Mammary epithelial cell (primary cell): ENCODE measurements at regions of chrX and their contacts with region 1.

Region 1: GRCh38 chrX:49922291-49923241 is at the start of gene CLCN5:
- DNase-seq: peak; percentile 91
- H3K4me3 ChIP-seq: peak within 1 kb of the TSS; percentile 63 to 66 (median 64)
- H3K27ac ChIP-seq: peak within 1 kb of the TSS; percentile 76
- H3K4me1 ChIP-seq: peaks cover 3% of the 10 kb centered on the region
- H3K27me3 ChIP-seq: no peaks in the 10 kb centered on the region
- CTCF ChIP-seq: no peak
- total RNA-seq, gene CLCN5: 6.9 to 10.8 TPM

Region 2: DNA sequence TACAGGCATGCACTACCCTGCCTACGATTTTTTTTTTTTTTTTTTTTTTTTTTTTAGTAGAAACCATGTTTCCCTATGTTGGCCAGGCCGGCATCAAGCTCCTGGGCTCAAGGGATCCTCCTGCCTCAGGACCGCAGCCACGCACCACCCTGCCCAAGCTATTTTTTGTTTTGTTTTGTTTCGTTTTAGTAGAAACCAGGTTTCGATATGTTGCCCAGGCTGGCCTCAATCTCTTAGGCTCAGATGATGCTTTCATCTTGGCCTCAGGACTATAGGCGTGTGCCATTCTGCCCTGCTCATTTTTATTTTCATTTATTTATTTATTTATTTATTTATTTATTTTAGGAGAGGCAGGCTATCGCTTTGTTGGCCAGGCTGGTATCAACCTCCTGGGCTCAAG is 1564.9 kb before region 1 on chrX:
- CTCF ChIA-PET with region 1: no interaction called
- dilution Hi-C with region 1: no loop called
- in situ Hi-C with region 1: no loop called
- intact Hi-C with region 1: no loop called
- DNase-seq: no peak
- H3K4me3 ChIP-seq: no peak overlapping the region
- H3K27ac ChIP-seq: no peak overlapping the region
- H3K4me1 ChIP-seq: no peaks in the 10 kb centered on the region
- H3K27me3 ChIP-seq: no peaks in the 10 kb centered on the region
- CTCF ChIP-seq: no peak

Region 3: DNA sequence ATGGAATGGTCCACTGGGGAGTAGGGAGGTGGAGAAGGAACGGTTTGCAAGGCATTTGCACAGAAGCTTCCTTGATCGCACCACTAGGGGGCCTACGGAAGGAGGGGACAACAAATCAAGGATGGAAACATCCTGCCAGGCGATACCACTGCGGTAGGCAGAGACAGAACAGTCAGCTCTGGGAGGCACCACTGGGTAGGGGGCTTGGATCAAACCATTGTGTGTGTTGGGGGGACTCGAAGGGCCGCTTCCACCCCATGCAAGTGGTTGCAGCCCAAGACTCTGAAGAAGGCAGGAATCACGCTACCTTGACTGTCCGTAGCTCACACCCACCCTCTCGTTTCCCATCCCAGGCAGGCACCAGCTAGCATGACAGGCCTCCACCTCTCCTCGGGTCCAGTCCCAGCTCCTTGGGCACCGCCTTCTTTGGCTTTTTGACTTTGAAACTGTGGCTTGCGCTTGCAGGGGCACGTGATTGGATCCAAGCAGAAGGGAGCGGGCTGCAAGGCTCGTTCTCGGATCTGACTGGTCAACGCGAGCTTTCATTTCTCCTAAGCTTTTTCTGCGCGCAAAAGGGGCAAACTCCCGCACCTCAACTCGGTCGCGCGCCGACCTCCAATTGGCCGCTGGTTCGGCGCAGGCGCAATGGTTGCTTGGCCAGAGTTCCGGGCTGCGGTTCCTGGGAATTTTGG is 295.3 kb before region 1 on chrX:
- CTCF ChIA-PET with region 1: no interaction called
- dilution Hi-C with region 1: no loop called
- in situ Hi-C with region 1: no loop called
- intact Hi-C with region 1: no loop called
- DNase-seq: peak; percentile 1
- H3K4me3 ChIP-seq: no peak overlapping the region
- H3K27ac ChIP-seq: no peak overlapping the region
- H3K4me1 ChIP-seq: no peaks in the 10 kb centered on the region
- H3K27me3 ChIP-seq: no peaks in the 10 kb centered on the region
- CTCF ChIP-seq: no peak

Region 4: DNA sequence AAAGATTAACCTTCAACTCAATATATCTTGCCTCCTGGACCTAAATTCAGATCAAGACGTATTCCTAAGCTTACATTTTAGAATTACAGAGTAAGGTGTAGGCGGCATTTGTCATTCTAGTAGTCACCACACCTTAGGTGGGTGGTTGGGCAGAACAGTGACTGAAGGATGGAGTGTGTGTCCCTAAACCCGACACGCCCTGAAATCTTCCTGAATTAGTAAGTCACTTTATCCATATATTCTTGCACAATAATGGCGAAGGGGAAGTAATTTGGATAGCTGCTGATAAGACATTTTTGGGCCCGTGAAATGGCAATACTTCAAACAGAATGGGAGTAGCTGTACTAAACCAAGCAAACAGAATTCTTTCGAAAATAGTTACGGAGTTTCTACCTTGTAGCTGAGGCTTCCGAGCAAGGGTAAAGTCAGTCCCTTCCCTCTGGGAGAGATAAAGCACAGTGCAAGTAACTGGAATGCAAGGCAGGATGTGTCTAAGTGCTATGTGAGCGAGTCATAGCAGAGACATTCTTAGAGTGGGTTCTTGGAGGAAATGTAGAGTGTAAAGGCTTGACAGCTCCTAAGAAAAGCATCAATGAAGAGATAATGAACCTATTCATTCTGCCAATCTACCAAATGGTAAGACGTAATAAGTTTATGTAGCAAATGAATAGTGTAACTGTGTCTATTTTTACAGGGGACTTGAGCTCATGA is 72.6 kb after region 1 on chrX:
- CTCF ChIA-PET with region 1: no interaction called
- dilution Hi-C with region 1: no loop called
- in situ Hi-C with region 1: no loop called
- intact Hi-C with region 1: loop called (anchors 5 kb)
- DNase-seq: peak; percentile 16
- H3K4me3 ChIP-seq: no peak overlapping the region
- H3K27ac ChIP-seq: peak overlapping the region; percentile 58
- H3K4me1 ChIP-seq: peaks cover 32% of the 10 kb centered on the region
- H3K27me3 ChIP-seq: no peaks in the 10 kb centered on the region
- CTCF ChIP-seq: no peak

Region 5: DNA sequence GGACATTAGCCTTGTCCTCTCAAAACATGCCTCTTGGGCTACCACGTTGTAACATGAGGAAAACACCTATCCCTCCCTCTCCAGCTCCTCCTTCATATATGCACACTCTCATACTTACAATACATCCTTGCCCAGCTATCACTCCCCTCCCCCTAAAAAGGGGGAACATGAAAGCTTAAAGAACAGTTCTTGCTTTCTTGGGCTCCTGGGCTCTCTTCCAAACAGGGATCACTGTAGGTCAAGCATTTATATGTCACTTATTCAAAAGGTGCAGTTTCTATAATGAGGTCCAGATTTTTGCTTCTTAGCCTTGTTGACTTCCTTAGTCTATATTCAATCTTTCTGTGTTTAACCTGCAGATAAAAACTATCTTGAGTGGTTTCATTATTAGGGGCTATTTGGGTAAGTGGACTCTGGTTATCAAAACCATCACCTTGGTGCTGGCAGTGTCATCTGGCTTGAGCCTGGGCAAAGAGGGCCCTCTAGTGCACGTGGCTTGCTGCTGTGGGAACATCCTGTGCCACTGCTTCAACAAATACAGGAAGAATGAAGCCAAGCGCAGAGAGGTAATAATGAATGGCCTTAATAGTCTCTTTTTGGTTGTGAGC is 158.8 kb after region 1 on chrX:
- CTCF ChIA-PET with region 1: no interaction called
- dilution Hi-C with region 1: no loop called
- in situ Hi-C with region 1: no loop called
- intact Hi-C with region 1: loop called (anchors 2 kb)
- DNase-seq: no peak
- H3K4me3 ChIP-seq: no peak overlapping the region
- H3K27ac ChIP-seq: no peak overlapping the region
- H3K4me1 ChIP-seq: no peaks in the 10 kb centered on the region
- H3K27me3 ChIP-seq: peaks cover 2% of the 10 kb centered on the region
- CTCF ChIP-seq: peak; percentile 24 to 46

Region 6: GRCh38 chrX:50579955-50580354 is 657.4 kb after region 1 on chrX:
- CTCF ChIA-PET with region 1: no interaction called
- dilution Hi-C with region 1: no loop called
- in situ Hi-C with region 1: loop called (anchors 25 kb)
- intact Hi-C with region 1: no loop called
- DNase-seq: peak; percentile 53
- H3K4me3 ChIP-seq: no peak overlapping the region
- H3K27ac ChIP-seq: no peak overlapping the region
- H3K4me1 ChIP-seq: no peaks in the 10 kb centered on the region
- H3K27me3 ChIP-seq: peaks cover 2% of the 10 kb centered on the region
- CTCF ChIP-seq: peak; percentile 63 to 68